ENCODE measurements at regions of chr4 and their contacts with region 1.

Region 1: GRCh38 chr4:78612398-78613178 is 61.0 kb downstream of the ANXA3 start:
- DNase-seq: no peak
- H3K4me3 Mint-ChIP-seq: no peak overlapping the region
- H3K27ac Mint-ChIP-seq: no peak overlapping the region
- H3K4me1 Mint-ChIP-seq: peaks cover 26% of the 10 kb centered on the region
- H3K27me3 Mint-ChIP-seq: peaks cover 7% of the 10 kb centered on the region

Region 2: GRCh38 chr4:78864405-78865024 is 251.9 kb after region 1 on chr4:
- CTCF ChIA-PET with region 1: interaction called, 20 read pairs
- POLR2A ChIA-PET with region 1: no interaction called
- DNase-seq: no peak
- H3K4me3 Mint-ChIP-seq: no peak overlapping the region
- H3K27ac Mint-ChIP-seq: no peak overlapping the region
- H3K4me1 Mint-ChIP-seq: peaks cover 3% of the 10 kb centered on the region
- H3K27me3 Mint-ChIP-seq: no peaks in the 10 kb centered on the region